KBM-7 (cell line): ENCODE measurements at regions of chr16 and their contacts with region 1.

Region 1: DNA sequence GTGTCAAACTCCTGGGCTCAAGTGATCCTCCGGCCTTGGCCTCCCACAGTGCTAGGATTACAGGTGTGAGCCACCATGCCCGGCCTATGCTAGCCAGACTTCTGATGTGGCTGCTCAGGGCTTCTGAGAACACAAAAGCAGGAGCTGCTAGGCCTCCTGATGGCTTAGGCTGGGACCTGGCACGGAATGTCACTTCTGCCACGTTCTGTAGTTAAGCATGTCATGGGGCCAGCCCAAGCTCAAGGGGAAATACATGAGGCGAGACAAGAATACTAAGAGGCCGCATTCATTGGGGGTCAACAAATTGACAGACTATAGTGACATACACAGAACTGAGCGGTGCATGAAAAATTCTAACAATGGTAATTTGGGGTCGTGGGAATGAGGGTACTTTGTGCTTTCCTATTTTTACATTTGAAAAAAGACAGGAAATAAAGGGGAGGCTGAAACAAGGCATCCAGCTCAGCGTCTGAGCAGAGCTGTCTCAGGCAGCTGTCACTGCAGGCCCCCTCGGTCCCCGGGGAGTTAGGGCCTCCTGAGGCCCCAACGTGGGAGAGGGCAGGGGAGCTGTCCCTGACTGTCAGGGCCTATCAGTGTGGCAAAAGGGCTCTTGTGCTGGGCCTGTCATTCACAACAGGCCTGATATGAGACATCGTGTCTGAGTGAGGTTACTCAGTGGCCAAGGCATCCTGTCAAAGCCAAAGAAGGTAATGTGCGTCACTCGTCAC is 26.4 kb downstream of the CFAP20 start:
- DNase-seq: no peak

Region 2: GRCh38 chr16:58011652-58012051 is 91.2 kb before region 1 on chr16:
- in situ Hi-C with region 1: loop called (anchors 10 kb)
- DNase-seq: no peak

Region 3: DNA sequence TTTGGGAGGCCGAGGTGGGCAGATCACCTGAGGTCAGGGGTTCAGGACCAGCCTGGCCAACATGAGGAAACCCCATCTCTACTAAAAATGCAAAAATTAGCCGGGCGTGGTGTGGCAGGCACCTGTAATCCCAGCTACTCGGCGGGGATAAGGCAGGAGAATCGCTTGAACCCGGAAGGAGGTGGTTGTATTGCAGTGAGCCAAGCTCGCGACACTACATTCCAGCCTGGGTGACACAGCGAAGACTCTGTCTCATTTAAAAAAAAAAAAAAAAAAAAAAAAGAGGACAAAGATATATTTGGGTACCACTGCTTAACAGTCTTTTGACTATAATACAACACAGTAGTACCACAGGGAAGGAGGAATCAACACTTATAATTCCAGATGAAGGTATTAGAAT is 517.6 kb after region 1 on chr16:
- in situ Hi-C with region 1: no loop called
- DNase-seq: no peak